ENCODE measurements at regions of chr17 and their contacts with region 1.

Region 1: GRCh38 chr17:28717578-28718333 is at the start of gene RAB34:
- DNase-seq: peak in 1 of 2 donors; percentile 37
- ATAC-seq: no peak
- H3K4me3 ChIP-seq: peak within 1 kb of the TSS; percentile 26
- H3K4me3 Mint-ChIP-seq: peak within 1 kb of the TSS; percentile 40
- H3K27ac ChIP-seq: no peak within 1 kb of the TSS
- H3K27ac Mint-ChIP-seq: peak within 1 kb of the TSS; percentile 3 to 16
- H3K4me1 ChIP-seq: peaks cover 47% of the 10 kb centered on the region
- H3K4me1 Mint-ChIP-seq: peaks cover 17 to 36% of the 10 kb centered on the region in 2 donors
- H3K27me3 ChIP-seq: peaks cover 14% of the 10 kb centered on the region
- H3K27me3 Mint-ChIP-seq: peaks cover 15 to 28% of the 10 kb centered on the region in 2 donors
- CTCF ChIP-seq: no peak
- total RNA-seq, gene RAB34: 3.7 to 12.9 (median 3.8) TPM

Region 2: DNA sequence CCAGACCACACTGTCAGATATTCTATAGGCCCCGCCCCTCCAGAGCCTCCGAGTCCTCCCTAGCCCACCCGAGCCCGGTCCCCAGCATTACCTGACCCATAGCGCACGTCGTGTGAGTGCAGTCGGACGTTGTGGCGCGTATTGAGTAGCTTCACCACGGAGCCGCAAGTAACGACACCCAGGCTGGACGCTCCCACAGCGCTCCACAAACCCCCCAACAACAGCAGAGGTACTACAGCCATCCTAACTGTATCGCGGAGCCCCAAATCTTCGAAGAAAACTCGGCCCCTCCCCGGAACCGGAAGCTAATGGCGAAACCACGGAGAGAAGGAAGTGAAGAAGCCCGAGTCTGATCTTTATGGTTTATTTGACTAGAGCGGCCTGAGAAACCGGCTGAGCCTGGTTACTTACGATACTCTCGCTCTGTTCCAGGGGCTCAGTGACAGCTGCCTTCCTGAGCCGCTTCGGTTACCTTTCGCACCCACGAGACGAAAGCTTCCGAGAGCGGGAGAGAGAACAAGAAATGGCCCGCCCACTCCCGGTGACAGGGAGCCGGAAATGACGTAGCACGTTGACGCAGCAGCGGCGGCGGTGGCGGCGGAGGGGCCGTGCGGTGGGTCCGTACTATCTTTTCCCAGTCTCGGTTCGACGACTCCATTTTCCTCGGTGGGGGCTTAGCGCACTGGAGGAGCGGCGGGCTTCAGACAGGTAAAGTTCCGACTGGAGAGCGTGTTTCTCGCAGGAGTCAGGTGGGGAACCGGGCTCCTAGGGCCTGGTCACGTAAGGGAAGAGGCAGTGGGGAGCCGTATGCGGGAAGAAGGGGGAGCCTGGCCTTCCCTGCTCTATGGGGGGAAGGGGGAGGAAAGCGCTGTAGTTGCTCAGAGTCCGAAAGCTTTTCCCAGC is 55.9 kb before region 1 on chr17 and contains the starts of genes SDF2 and SUPT6H:
- intact Hi-C with region 1: loop called (anchors 5 kb)
- DNase-seq: peak; percentile 95 to 96
- ATAC-seq: peak; percentile 81 to 91 (median 85)
- H3K4me3 ChIP-seq: peak within 1 kb of the TSS; percentile 86
- H3K4me3 Mint-ChIP-seq: peak within 1 kb of the TSS; percentile 98
- H3K27ac ChIP-seq: peak within 1 kb of the TSS; percentile 93
- H3K27ac Mint-ChIP-seq: peak within 1 kb of the TSS; percentile 100
- H3K4me1 ChIP-seq: peaks cover 10% of the 10 kb centered on the region
- H3K4me1 Mint-ChIP-seq: peaks cover 55 to 57% of the 10 kb centered on the region in 2 donors
- H3K27me3 ChIP-seq: no peaks in the 10 kb centered on the region
- H3K27me3 Mint-ChIP-seq: no peaks in the 10 kb centered on the region
- CTCF ChIP-seq: no peak
- total RNA-seq, gene SDF2: 53.0 to 65.3 (median 53.7) TPM
- total RNA-seq, gene SUPT6H: 170 to 184 (median 177) TPM

Region 3: DNA sequence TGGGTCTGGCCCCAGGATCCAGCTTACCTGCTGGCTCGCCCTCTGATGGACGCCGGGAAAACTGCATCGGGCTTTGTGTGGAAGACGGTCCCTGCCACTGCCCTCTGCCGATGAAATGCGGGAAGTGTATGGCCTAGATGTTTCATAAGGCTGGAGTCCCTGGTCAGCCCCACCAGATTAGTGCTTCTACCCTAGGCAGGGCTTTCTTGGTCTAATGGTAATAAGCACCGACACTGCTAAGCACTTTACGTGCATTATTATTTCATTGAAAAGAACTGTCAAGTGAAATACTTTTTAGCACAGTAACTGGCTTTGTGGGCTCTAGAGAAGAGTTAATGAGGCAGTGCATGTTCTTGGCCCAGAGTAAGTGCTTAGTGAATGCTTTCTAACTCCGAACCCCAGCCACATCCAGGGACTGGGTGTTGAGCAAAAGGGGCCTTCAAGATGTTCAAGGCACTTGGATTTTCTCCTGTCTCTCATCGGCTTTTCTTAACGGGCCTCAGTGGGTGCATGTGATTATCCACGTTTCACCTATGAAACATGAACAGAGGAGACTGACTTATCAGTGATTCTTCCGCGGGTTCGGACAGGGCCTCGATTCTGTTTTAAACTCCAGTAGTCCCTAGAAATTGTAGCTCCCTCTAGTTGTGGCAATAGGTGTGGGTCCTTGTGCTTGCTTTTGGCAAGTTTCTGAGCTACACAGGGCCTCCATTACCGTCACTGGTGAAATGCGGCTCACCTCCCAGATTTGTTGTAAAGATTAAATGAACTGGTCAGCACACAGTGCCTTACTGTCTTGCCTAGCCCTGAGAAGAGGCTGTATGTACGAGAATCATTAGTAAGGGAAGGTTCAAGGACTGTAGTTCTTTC is 32.7 kb after region 1 on chr17:
- intact Hi-C with region 1: loop called (anchors 5 kb)
- DNase-seq: peak; percentile 85 to 95
- ATAC-seq: peak; percentile 95 to 97 (median 96)
- H3K4me3 ChIP-seq: no peak overlapping the region
- H3K4me3 Mint-ChIP-seq: no peak overlapping the region
- H3K27ac ChIP-seq: no peak overlapping the region
- H3K27ac Mint-ChIP-seq: no peak overlapping the region
- H3K4me1 ChIP-seq: peaks cover 24% of the 10 kb centered on the region
- H3K4me1 Mint-ChIP-seq: peaks cover 5 to 9% of the 10 kb centered on the region in 2 donors
- H3K27me3 ChIP-seq: no peaks in the 10 kb centered on the region
- H3K27me3 Mint-ChIP-seq: no peaks in the 10 kb centered on the region
- CTCF ChIP-seq: peak; percentile 100

Region 4: GRCh38 chr17:28982131-28982951 is 264.6 kb after region 1 on chr17:
- intact Hi-C with region 1: no loop called
- DNase-seq: peak; percentile 58 to 92
- ATAC-seq: peak; percentile 82 to 95 (median 91)
- H3K4me3 ChIP-seq: no peak overlapping the region
- H3K4me3 Mint-ChIP-seq: peak overlapping the region; percentile 70
- H3K27ac ChIP-seq: peak overlapping the region; percentile 85
- H3K27ac Mint-ChIP-seq: peak overlapping the region; percentile 97 to 99
- H3K4me1 ChIP-seq: peaks cover 31% of the 10 kb centered on the region
- H3K4me1 Mint-ChIP-seq: peaks cover 18 to 26% of the 10 kb centered on the region in 2 donors
- H3K27me3 ChIP-seq: peaks cover 2% of the 10 kb centered on the region
- H3K27me3 Mint-ChIP-seq: no peaks in the 10 kb centered on the region
- CTCF ChIP-seq: no peak

Region 5: DNA sequence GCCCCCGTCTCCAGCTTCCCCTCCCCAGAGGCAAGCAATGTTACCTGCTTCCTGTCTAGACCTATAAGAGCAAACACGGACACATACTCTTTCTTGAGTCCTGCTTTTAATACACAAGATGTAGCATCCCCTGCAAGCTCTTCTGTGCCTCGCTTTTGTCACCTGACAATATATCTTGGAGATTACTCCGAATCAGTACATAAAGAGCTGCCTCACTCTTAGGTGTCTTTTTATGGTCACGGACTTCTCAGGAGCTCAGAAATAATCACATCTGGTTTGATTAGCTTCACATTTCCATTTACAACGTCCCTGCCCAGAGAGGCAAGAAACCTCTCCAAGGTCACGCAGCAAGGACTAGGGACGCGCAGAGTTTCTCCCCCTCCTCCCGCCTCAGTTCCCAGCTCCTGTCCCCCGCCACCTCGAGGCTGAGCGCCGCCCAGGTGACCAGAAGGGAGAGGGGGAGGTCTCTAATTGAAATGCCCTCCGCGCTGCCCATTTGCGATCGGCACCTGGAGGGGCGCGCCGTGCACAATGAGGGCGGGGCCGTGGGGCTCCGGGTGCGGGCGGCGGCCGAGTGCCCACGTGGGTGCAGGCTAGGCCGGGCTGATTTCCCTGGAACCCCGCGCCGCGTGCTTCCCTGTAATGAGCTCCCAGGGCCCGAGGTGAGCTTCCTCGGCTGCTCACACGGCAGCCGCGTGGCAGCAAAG is 301.9 kb after region 1 on chr17:
- intact Hi-C with region 1: no loop called
- DNase-seq: no peak
- ATAC-seq: peak in 2 of 3 donors; percentile 36 to 41
- H3K4me3 ChIP-seq: no peak overlapping the region
- H3K4me3 Mint-ChIP-seq: no peak overlapping the region
- H3K27ac ChIP-seq: no peak overlapping the region
- H3K27ac Mint-ChIP-seq: peak overlapping the region in 1 of 2 donors; percentile 29
- H3K4me1 ChIP-seq: peaks cover 9% of the 10 kb centered on the region
- H3K4me1 Mint-ChIP-seq: peaks cover 10 to 12% of the 10 kb centered on the region in 2 donors
- H3K27me3 ChIP-seq: peaks cover 7% of the 10 kb centered on the region
- H3K27me3 Mint-ChIP-seq: peaks cover 43 to 49% of the 10 kb centered on the region in 2 donors
- CTCF ChIP-seq: no peak

Region 6: DNA sequence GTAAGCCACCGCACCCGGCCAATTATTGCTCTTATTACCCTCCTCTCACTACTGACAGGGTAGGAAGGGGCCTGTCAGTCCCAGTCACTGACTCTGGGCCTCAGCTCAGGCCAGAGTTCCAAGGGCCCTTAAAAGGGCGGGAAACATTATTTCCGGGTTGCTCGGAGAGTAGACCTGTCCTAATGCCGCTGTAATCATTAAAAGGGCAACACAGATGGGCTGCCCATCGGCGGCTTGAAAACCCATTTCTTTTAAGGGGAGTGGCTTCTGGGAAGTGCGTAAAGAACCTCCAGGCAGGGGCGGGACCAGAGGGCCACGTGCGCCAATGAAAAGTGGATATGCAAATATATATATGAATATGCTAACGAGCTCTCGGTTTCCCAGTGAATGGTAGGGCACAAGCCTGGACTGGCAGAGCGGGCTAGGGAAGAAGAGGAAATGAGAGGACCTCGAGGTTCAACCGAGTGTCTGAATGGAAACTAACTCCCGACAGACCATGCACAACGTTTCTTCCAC is 351.8 kb after region 1 on chr17:
- intact Hi-C with region 1: no loop called
- DNase-seq: no peak
- ATAC-seq: no peak
- H3K4me3 ChIP-seq: no peak overlapping the region
- H3K4me3 Mint-ChIP-seq: no peak overlapping the region
- H3K27ac ChIP-seq: no peak overlapping the region
- H3K27ac Mint-ChIP-seq: no peak overlapping the region
- H3K4me1 ChIP-seq: peaks cover 10% of the 10 kb centered on the region
- H3K4me1 Mint-ChIP-seq: peaks cover 24 to 32% of the 10 kb centered on the region in 2 donors
- H3K27me3 ChIP-seq: no peaks in the 10 kb centered on the region
- H3K27me3 Mint-ChIP-seq: no peaks in the 10 kb centered on the region
- CTCF ChIP-seq: no peak